ENCODE measurements at regions of chr1 and their contacts with region 1.

Region 1: GRCh38 chr1:204975570-204976235 is 67.3 kb upstream of the CNTN2 start:
- DNase-seq: no peak
- ATAC-seq: peak; percentile 75 to 90 (median 83)
- H3K4me3 ChIP-seq: no peak overlapping the region
- H3K27ac ChIP-seq: no peak overlapping the region
- H3K4me1 ChIP-seq: no peaks in the 10 kb centered on the region
- H3K27me3 ChIP-seq: peaks cover 0 to 11% (median 0%) of the 10 kb centered on the region in 3 donors
- CTCF ChIP-seq: peak; percentile 79

Region 2: GRCh38 chr1:205061665-205062069 is 86.0 kb after region 1 on chr1:
- intact Hi-C with region 1: loop called (anchors 2 to 5 kb)
- DNase-seq: peak; percentile 66 to 75
- ATAC-seq: peak; percentile 59 to 79 (median 73)
- H3K4me3 ChIP-seq: no peak overlapping the region
- H3K27ac ChIP-seq: no peak overlapping the region
- H3K4me1 ChIP-seq: no peaks in the 10 kb centered on the region
- H3K27me3 ChIP-seq: no peaks in the 10 kb centered on the region
- CTCF ChIP-seq: peak; percentile 71

Region 3: GRCh38 chr1:205141236-205142101 is 165.8 kb after region 1 on chr1:
- intact Hi-C with region 1: loop called in 1 of 2 experiments (anchors 5 kb)
- DNase-seq: peak; percentile 58 to 80
- ATAC-seq: peak; percentile 75 to 90 (median 84)
- H3K4me3 ChIP-seq: peak overlapping the region; percentile 20
- H3K27ac ChIP-seq: no peak overlapping the region
- H3K4me1 ChIP-seq: peaks cover 15% of the 10 kb centered on the region
- H3K27me3 ChIP-seq: no peaks in the 10 kb centered on the region
- CTCF ChIP-seq: peak; percentile 81

Measured in psoas muscle (tissue), 8 donors.